Panc1 (cell line): ENCODE measurements at regions of chr20 and their contacts with region 1.

Region 1: GRCh38 chr20:51639206-51639832 is 96.8 kb upstream of the NFATC2 start:
- DNase-seq: no peak
- ATAC-seq: peak; percentile 91
- H3K4me3 ChIP-seq: no peak overlapping the region; a peak in 1 of 4 replicates
- H3K27ac ChIP-seq: no peak overlapping the region; the same call in 1 of the 2 replicates
- H3K4me1 ChIP-seq: peaks cover 4% of the 10 kb centered on the region; the same call in 1 of the 2 replicates
- H3K27me3 ChIP-seq: no peaks in the 10 kb centered on the region
- CTCF ChIP-seq: peak; percentile 93

Region 2: GRCh38 chr20:51966291-51966971 is 327.1 kb after region 1 on chr20:
- CTCF ChIA-PET with region 1: interaction called, 4 read pairs
- POLR2A ChIA-PET with region 1: no interaction called
- in situ Hi-C with region 1: no loop called
- intact Hi-C with region 1: loop called (anchors 5 kb)
- DNase-seq: peak; percentile 65
- ATAC-seq: peak; percentile 95
- H3K4me3 ChIP-seq: no peak overlapping the region
- H3K27ac ChIP-seq: no peak overlapping the region
- H3K4me1 ChIP-seq: peaks cover 7% of the 10 kb centered on the region; the same call in 1 of the 2 replicates
- H3K27me3 ChIP-seq: no peaks in the 10 kb centered on the region
- CTCF ChIP-seq: peak; percentile 86

Region 3: DNA sequence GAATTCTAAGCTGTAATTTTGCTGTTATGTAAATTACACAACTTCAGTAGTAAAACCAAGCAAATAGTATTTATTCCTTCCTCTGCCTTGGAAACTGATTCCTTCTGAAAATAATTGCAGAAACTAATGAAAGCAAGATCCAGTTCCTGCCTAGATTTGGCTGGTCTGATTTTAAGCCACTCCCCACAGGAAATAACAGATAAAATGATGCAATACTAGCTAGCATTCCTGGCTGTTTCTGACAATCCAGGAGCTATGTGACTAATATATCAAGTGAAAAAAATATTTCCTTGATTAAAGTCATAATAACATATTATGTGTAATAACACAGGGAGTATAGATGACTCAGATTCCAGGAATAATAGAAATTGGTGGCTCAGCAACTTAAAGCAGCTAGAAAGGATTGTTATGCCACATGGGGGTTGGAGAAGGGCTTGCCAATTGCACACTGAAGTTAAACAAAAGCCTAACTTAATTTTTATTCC is 345.7 kb after region 1 on chr20:
- CTCF ChIA-PET with region 1: no interaction called
- POLR2A ChIA-PET with region 1: no interaction called
- in situ Hi-C with region 1: no loop called
- intact Hi-C with region 1: no loop called
- DNase-seq: peak; percentile 54
- ATAC-seq: no peak
- H3K4me3 ChIP-seq: no peak overlapping the region
- H3K27ac ChIP-seq: no peak overlapping the region; the same call in 1 of the 2 replicates
- H3K4me1 ChIP-seq: no peaks in the 10 kb centered on the region
- H3K27me3 ChIP-seq: no peaks in the 10 kb centered on the region
- CTCF ChIP-seq: no peak

Region 4: GRCh38 chr20:52083627-52084232 is 444.4 kb after region 1 on chr20:
- CTCF ChIA-PET with region 1: no interaction called
- POLR2A ChIA-PET with region 1: no interaction called
- in situ Hi-C with region 1: no loop called
- intact Hi-C with region 1: loop called (anchors 1 kb)
- DNase-seq: peak; percentile 32
- ATAC-seq: peak; percentile 93
- H3K4me3 ChIP-seq: no peak overlapping the region
- H3K27ac ChIP-seq: peak overlapping the region; percentile 61
- H3K4me1 ChIP-seq: peaks cover 5% of the 10 kb centered on the region
- H3K27me3 ChIP-seq: no peaks in the 10 kb centered on the region
- CTCF ChIP-seq: peak; percentile 79